ENCODE measurements at regions of chr11 and their contacts with region 1.

Region 1: DNA sequence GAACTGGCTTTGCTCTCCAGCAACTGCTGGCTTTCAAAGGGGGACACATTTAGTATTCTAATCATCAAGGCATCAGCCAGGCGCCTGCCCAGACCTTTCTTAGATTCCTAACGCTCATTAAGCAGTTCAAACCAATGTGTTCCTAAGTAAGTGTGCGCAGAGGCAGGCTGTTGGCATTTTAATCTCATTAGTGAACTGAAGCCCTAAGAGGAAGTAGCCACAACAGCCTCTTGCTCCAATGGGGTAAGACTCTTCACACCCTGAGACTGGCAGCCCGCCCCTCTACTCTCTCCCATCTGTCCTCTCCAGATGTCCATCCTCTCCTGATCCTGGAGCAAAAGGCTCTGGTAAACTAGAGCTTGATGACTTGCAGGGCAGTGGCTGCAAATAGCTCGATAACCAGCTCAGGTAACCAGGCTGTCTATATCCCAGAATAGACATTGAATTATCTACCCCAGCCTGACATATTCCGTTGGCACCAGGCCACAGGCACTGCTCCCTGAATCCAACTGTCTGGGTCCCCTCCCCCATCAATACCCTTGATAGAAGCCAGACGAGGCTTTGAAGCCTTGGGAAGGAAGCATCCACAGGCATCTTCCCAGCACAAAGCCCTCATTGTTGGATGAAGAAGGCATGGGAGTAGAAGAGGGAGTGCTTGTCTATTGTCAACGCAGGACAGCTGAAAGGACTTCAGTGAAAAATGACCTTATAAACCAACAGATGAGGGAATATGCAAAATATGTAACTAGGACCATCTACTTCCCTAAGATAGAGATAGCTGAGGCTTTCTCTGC is 321.1 kb downstream of the TENM4 start:
- DNase-seq: no peak
- ATAC-seq: peak in 1 of 2 donors; percentile 25
- H3K4me3 ChIP-seq: no peak overlapping the region
- H3K27ac ChIP-seq: no peak overlapping the region
- H3K4me1 ChIP-seq: no peaks in the 10 kb centered on the region
- H3K27me3 ChIP-seq: no peaks in the 10 kb centered on the region

Region 2: DNA sequence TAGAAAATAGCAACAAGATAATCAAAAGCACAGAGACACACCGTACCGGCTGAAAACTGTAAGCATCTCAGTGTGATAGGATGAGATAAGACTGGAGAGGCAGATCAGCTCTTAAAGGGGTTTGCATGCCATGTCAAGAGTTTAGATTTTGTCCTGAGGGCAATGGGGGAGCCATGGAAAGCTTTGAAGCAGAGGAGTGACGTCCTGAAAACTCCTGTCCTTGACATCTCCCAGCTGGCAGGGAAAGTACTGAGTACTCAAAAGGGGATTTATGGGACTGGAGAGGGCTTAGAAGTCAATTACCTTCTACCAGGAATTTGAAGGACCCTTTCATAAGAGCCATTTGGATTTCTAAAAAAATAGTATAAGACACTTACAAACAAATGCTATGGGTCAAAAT is 124.5 kb before region 1 on chr11:
- intact Hi-C with region 1: no loop called
- DNase-seq: no peak
- ATAC-seq: no peak
- H3K4me3 ChIP-seq: no peak overlapping the region
- H3K27ac ChIP-seq: no peak overlapping the region
- H3K4me1 ChIP-seq: no peaks in the 10 kb centered on the region
- H3K27me3 ChIP-seq: no peaks in the 10 kb centered on the region

Region 3: DNA sequence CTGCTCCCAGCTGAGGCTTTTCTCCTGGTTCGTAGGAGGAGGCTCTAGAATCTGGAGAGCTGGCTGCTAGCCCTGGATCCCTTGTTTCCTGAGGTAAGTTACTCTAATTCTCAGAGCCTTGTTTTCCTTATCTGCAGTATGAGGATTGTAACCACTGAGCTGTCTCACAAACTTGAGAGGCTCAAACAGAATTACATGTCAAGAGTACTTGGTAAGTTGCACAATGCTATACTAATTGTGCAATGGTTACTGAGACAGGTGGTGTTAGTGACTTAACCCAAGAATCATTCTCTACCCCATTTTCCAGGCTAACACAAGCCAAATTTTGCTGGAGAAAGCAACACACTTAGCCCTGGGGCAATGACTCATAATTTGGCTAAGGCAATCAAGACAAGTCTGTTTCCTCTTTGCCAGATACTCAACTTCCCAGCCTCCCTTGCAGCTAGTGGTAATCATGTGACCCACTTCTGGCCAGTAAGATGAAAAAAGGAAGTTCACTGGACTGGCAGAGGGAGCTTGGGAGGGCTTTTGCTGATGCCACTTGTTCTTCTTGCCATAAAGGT is 26.8 kb before region 1 on chr11:
- intact Hi-C with region 1: loop called in 1 of 4 experiments (anchors 2 kb)
- DNase-seq: no peak
- ATAC-seq: peak; percentile 52 to 65
- H3K4me3 ChIP-seq: no peak overlapping the region
- H3K27ac ChIP-seq: no peak overlapping the region
- H3K4me1 ChIP-seq: no peaks in the 10 kb centered on the region
- H3K27me3 ChIP-seq: no peaks in the 10 kb centered on the region

Measured in right cardiac atrium (tissue), 5 donors.